ENCODE measurements at regions of chr11 and their contacts with region 1.

Region 1: GRCh38 chr11:84558085-84558905 is 1068.8 kb downstream of the DLG2 start:
- DNase-seq: peak; percentile 44 to 77
- ATAC-seq: peak; percentile 91 to 98
- H3K4me3 ChIP-seq: no peak overlapping the region
- H3K27ac ChIP-seq: peak overlapping the region; percentile 8 to 21; a peak in 1 of 6 replicates
- H3K4me1 ChIP-seq: peaks cover 19% of the 10 kb centered on the region
- CTCF ChIP-seq: peak; percentile 94
- EP300 ChIP-seq: no peak
- POLR2A ChIP-seq: no peak
- RAD21 ChIP-seq: peak; percentile 90 to 91

Region 2: DNA sequence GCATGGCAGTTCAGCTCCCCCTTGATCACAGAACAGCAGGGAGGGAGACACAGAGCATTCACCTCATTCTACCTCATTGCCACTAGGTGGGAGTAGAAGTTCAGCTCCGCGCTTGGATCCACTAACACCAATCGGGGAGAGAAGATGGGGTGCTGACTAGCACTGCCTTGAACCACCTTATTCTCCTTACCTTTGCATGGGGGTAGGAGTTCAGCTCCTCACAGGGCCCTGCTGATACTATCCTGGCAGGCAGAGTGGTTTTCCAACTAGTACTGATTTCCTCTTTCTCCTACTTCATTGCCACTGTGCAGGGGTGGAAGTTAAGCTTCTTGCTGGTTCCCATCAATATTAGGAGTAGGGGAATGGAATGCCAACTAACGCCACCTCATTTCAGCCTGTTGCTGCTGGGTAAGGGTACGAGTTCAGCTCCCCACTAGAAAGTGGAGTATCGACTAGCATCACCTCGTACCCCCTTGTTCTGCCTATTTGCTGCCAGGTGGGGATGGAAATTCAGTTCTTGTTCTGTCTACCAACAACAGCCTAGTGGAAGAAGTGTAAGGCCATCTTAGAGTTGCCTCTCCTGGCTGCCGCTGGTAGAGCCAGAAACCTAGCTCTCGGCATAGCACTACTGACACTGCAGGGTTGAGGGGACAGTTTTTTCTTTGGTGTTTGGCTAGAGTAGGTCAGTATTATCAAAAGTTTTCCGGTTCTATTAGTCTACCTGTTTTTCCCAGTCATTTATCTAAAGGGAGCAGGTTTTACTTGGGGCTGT is 721.2 kb before region 1 on chr11:
- CTCF ChIA-PET with region 1: interaction called, 10 read pairs
- POLR2A ChIA-PET with region 1: no interaction called
- DNase-seq: peak; percentile 52 to 57
- ATAC-seq: peak; percentile 98 to 99
- H3K4me3 ChIP-seq: no peak overlapping the region
- H3K27ac ChIP-seq: no peak overlapping the region
- H3K4me1 ChIP-seq: no peaks in the 10 kb centered on the region
- CTCF ChIP-seq: peak; percentile 66
- EP300 ChIP-seq: no peak
- POLR2A ChIP-seq: no peak
- RAD21 ChIP-seq: peak; percentile 70 to 85

Region 3: DNA sequence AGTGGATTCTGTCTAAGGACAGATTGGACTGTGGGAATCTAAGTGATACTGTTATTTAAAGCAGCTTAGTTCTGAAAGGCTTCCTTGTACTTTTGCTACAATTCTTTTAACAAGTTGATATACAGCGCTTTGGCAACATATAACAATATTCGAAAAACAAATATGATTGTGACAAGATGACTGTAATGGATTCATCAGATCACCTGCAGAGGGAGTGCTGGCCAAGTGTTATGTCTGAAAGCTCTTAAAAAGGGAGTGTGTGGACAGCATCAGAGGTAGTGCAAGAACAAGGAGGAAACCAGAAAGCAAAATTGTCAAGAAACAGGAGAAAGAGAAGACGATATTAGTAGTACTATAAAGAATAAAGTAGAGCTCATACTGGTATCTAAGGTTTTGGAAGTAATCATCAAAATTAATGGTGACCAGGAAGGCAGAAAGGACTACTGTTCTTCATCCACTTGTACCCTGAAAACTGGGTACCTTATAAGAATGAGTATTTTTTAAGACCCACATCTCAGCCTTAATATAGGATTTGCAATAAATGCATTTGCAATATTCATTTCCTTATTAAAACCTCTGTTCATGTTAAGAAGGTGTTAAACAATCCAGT is 160.2 kb before region 1 on chr11:
- CTCF ChIA-PET with region 1: no interaction called
- POLR2A ChIA-PET with region 1: no interaction called
- DNase-seq: peak; percentile 4 to 50
- ATAC-seq: peak in 1 of 2 experiments; percentile 69; a peak in 3 of 6 replicates
- H3K4me3 ChIP-seq: no peak overlapping the region
- H3K27ac ChIP-seq: no peak overlapping the region
- H3K4me1 ChIP-seq: no peaks in the 10 kb centered on the region
- CTCF ChIP-seq: 0 out of 3 replicates have a peak, but pooled peaks have one; percentile 17
- EP300 ChIP-seq: no peak
- POLR2A ChIP-seq: no peak
- RAD21 ChIP-seq: peak in 1 of 2 experiments; percentile 34; a peak in 1 of 5 replicates

Region 4: DNA sequence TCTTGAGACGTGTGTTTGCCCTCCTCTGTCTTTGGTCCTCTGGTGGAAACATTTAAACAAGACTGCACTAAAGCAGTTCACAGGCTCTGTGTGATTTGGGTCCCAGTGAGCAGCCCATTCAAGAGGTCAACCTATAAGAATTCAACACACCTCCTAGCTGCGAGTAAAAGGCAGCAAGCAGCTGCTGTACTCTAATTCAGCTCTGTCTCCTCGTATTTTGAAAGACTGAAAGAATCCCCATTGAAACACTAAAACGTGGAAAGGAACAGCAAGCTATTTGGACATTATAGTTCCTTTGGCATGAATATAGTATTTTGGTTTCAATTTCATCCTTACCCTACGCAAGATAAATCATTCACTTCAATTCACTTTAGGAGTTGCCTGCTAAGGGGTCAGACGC is 22.1 kb after region 1 on chr11:
- CTCF ChIA-PET with region 1: no interaction called
- POLR2A ChIA-PET with region 1: no interaction called
- DNase-seq: no peak
- ATAC-seq: peak in 1 of 2 experiments; percentile 55; a peak in 2 of 6 replicates
- H3K4me3 ChIP-seq: no peak overlapping the region
- H3K27ac ChIP-seq: no peak overlapping the region
- H3K4me1 ChIP-seq: no peaks in the 10 kb centered on the region
- CTCF ChIP-seq: no peak
- EP300 ChIP-seq: no peak
- POLR2A ChIP-seq: no peak
- RAD21 ChIP-seq: no peak

Region 5: DNA sequence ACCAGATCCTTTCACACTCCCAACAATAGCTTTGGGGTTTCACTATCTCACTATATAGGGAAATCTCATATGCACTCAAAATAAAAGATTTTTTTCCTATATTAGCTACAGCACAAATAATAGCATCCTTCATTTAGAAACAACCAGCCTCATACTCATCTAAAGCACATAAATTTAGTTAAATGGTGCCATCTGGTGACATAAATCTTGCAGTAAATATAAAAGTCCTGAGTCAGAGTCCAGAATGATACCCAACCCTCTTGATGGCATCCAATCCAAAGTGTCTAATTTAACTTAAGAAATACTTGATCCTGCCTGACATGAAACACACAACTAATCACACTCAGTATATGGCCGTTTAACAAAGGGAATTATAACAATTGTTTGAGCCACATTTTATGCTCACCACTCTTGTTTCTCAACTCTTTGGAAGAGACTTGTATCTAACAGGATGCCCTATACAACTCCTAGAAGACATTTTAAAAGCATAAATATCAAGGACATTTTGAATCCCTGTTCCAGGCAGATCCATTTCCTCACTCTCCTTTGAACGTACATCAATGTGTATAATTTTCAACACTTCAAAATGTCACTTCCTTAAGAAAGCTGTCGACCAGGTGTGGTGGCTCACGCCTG is 1032.7 kb after region 1 on chr11:
- CTCF ChIA-PET with region 1: interaction called, 14 read pairs
- POLR2A ChIA-PET with region 1: no interaction called
- DNase-seq: peak; percentile 51 to 60
- ATAC-seq: peak; percentile 96 to 97
- H3K4me3 ChIP-seq: no peak overlapping the region
- H3K27ac ChIP-seq: no peak overlapping the region
- H3K4me1 ChIP-seq: no peaks in the 10 kb centered on the region
- CTCF ChIP-seq: peak; percentile 69
- EP300 ChIP-seq: no peak
- POLR2A ChIP-seq: no peak
- RAD21 ChIP-seq: peak; percentile 74 to 83